Activated CD8-positive, alpha-beta T cell treated with anti-CD3 and anti-CD28 coated beads, Interleukin-2, amount 10 ng/mL, durations not matched to agents 7 days and 5 days (primary cell): ENCODE measurements at regions of chr19 and their contacts with region 1.

Region 1: DNA sequence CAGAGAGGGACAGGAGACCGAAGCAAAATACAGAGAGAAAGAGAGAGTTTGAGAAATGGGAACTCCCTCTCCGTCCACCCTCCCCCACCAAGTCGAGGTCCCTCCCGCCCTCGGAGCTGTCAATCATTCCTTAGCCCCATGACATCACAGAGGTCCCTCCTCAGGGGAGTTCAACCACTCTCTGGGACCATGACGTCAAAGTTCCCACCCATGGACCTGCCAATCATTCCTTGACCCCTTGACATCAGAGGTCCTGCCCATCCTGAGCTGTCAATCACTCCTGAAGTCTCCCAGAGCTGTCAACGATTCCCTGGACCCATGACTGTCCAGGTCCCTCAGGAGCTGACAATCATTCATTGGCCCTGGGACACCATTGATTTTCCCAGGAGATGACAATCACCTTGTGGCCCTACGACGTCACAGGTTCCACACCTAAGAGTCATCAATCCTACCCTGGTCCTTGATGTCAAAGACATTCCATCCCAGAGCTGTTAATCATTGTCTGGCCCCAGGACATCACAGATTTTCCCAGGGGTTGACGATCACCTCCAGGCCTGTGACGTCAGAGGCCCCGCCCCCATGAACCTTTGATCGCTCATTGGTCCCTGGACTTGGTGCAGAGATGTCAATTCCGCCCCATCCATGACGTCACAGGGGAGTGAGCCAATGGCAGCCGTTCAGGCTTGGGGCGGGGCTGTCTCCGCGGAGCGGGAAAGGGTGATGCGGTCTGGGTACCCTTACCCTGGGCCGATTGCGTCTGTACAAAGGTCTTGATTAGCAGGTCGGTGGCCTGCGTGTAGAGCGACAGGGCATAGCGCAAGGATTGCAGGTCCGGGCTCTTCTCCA is 61.7 kb downstream of the COLGALT1 start:
- DNase-seq: no peak
- ATAC-seq: no peak
- H3K4me3 Mint-ChIP-seq: no peak overlapping the region
- H3K27ac Mint-ChIP-seq: no peak overlapping the region
- H3K4me1 Mint-ChIP-seq: peaks cover 3% of the 10 kb centered on the region
- H3K27me3 Mint-ChIP-seq: peaks cover 21% of the 10 kb centered on the region

Region 2: GRCh38 chr19:17605761-17606745 is 11.1 kb before region 1 on chr19:
- CTCF ChIA-PET with region 1: interaction called, 23 read pairs
- POLR2A ChIA-PET with region 1: interaction called, 3 read pairs
- DNase-seq: peak; percentile 80
- ATAC-seq: peak; percentile 87
- H3K4me3 Mint-ChIP-seq: peak overlapping the region; percentile 58
- H3K27ac Mint-ChIP-seq: peak overlapping the region; percentile 51
- H3K4me1 Mint-ChIP-seq: peaks cover 7% of the 10 kb centered on the region
- H3K27me3 Mint-ChIP-seq: peaks cover 31% of the 10 kb centered on the region

Region 3: DNA sequence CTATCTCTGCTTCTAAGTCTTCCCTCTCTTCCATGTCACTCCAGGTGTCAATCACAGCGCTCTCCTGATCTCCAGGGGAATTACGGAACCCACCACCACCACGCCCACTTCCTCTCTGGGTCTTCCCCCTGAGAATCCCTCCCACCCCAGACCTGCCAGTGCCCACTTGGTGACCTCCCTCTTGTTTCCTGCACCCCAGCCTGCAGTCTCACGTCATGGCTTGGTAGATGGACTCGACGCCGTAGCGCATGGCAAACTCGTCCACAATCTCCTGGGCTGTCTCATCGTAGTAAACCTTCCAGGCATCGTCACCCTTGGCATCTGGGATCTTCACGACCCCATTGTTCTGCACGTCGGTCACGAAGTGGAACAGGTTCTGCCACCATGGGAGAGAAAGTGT is 24.0 kb after region 1 on chr19:
- CTCF ChIA-PET with region 1: no interaction called
- POLR2A ChIA-PET with region 1: no interaction called
- DNase-seq: no peak
- ATAC-seq: no peak
- H3K4me3 Mint-ChIP-seq: no peak overlapping the region
- H3K27ac Mint-ChIP-seq: no peak overlapping the region
- H3K4me1 Mint-ChIP-seq: no peaks in the 10 kb centered on the region
- H3K27me3 Mint-ChIP-seq: peaks cover 5% of the 10 kb centered on the region